ENCODE measurements at regions of chr4 and their contacts with region 1.

Region 1: DNA sequence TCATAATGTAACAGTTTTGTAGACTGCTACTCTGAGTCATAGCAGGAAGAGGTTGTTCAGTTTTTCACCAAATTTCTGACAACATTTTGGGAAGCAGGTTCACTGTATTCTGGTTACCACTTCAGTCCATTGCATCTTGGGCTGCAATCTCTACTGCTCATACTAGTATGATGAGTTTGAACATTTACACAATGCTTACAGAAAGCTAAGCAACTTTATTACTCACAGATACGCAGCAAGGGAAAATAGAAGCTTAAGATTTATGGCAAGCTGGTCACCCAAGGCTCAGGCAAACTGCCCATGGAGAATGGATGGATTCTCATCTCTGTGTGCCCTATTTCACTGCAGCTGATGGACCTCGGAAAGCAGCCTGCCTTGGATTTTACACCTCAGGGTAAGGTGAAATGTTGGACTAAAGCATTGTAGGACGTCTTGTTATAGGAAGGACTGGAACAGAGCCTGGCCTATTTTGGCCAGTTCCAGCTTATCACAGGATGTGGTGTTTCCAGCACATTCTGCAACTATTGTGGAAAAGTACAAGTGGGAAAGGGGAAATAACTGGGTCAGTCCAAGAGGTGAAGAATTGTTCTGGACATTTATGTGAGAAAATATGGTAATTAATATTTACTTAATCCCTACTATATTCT is 887.1 kb upstream of the AGA start:
- DNase-seq: no peak
- ATAC-seq: no peak
- H3K4me3 ChIP-seq: no peak overlapping the region
- H3K4me3 Mint-ChIP-seq: no peak overlapping the region
- H3K27ac ChIP-seq: no peak overlapping the region
- H3K27ac Mint-ChIP-seq: no peak overlapping the region
- H3K4me1 ChIP-seq: no peaks in the 10 kb centered on the region
- H3K4me1 Mint-ChIP-seq: no peaks in the 10 kb centered on the region
- H3K27me3 ChIP-seq: no peaks in the 10 kb centered on the region
- H3K27me3 Mint-ChIP-seq: no peaks in the 10 kb centered on the region
- CTCF ChIP-seq: no peak

Region 2: GRCh38 chr4:178309890-178310289 is 19.5 kb before region 1 on chr4:
- intact Hi-C with region 1: loop called (anchors 2 kb)
- DNase-seq: no peak
- ATAC-seq: no peak
- H3K4me3 ChIP-seq: no peak overlapping the region
- H3K4me3 Mint-ChIP-seq: no peak overlapping the region
- H3K27ac ChIP-seq: no peak overlapping the region
- H3K27ac Mint-ChIP-seq: no peak overlapping the region
- H3K4me1 ChIP-seq: no peaks in the 10 kb centered on the region
- H3K4me1 Mint-ChIP-seq: no peaks in the 10 kb centered on the region
- H3K27me3 ChIP-seq: no peaks in the 10 kb centered on the region
- H3K27me3 Mint-ChIP-seq: no peaks in the 10 kb centered on the region
- CTCF ChIP-seq: no peak

Region 3: DNA sequence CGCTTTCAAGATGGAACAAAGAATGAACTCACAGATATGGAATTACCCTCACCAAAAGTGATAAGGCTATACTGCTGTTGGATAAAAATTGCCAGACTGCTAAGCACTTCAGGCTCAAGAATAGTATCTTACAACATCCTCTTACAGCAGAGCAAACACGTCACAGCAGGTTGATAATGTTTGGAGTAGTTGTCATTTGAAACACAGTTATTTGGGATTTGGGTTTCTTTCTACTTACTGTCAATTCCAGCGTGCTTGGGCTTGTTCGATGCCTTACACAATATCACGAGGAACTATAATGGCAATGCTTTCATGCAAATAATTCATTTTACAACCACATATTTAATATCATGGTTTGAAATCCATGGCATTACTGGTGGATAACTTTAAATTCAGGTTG is 336.6 kb after region 1 on chr4:
- intact Hi-C with region 1: no loop called
- DNase-seq: no peak
- ATAC-seq: no peak
- H3K4me3 ChIP-seq: no peak overlapping the region
- H3K4me3 Mint-ChIP-seq: no peak overlapping the region
- H3K27ac ChIP-seq: no peak overlapping the region
- H3K27ac Mint-ChIP-seq: no peak overlapping the region
- H3K4me1 ChIP-seq: no peaks in the 10 kb centered on the region
- H3K4me1 Mint-ChIP-seq: no peaks in the 10 kb centered on the region
- H3K27me3 ChIP-seq: no peaks in the 10 kb centered on the region
- H3K27me3 Mint-ChIP-seq: no peaks in the 10 kb centered on the region
- CTCF ChIP-seq: no peak

Measured in natural killer cell (primary cell).